ENCODE measurements at regions of chr9 and their contacts with region 1.

Region 1: GRCh38 chr9:80175286-80176150 is 603.8 kb downstream of the TLE4 start:
- DNase-seq: peak; percentile 64
- ATAC-seq: peak; percentile 66
- H3K4me3 ChIP-seq: no peak overlapping the region
- H3K27ac ChIP-seq: no peak overlapping the region
- H3K4me1 ChIP-seq: no peaks in the 10 kb centered on the region
- H3K27me3 ChIP-seq: no peaks in the 10 kb centered on the region
- CTCF ChIP-seq: peak; percentile 75
- POLR2A ChIP-seq: no peak
- RAD21 ChIP-seq: peak; percentile 78

Region 2: GRCh38 chr9:80134487-80134886 is 41.0 kb before region 1 on chr9:
- CTCF ChIA-PET with region 1: no interaction called
- POLR2A ChIA-PET with region 1: no interaction called
- dilution Hi-C with region 1: no loop called
- in situ Hi-C with region 1: no loop called
- intact Hi-C with region 1: no loop called
- DNase-seq: no peak
- ATAC-seq: no peak
- H3K4me3 ChIP-seq: no peak overlapping the region
- H3K27ac ChIP-seq: no peak overlapping the region
- H3K4me1 ChIP-seq: no peaks in the 10 kb centered on the region
- H3K27me3 ChIP-seq: peaks cover 4% of the 10 kb centered on the region; the same call in 1 of the 2 replicates
- CTCF ChIP-seq: no peak
- POLR2A ChIP-seq: no peak
- RAD21 ChIP-seq: no peak

Region 3: GRCh38 chr9:80503671-80504281 is 328.3 kb after region 1 on chr9:
- CTCF ChIA-PET with region 1: no interaction called
- POLR2A ChIA-PET with region 1: no interaction called
- dilution Hi-C with region 1: no loop called
- in situ Hi-C with region 1: no loop called
- intact Hi-C with region 1: loop called (anchors 10 kb)
- DNase-seq: peak; percentile 6
- ATAC-seq: no peak
- H3K4me3 ChIP-seq: no peak overlapping the region
- H3K27ac ChIP-seq: no peak overlapping the region
- H3K4me1 ChIP-seq: 0 out of 2 replicates have a peak, but pooled peaks cover 3% of the 10 kb centered on the region
- H3K27me3 ChIP-seq: no peaks in the 10 kb centered on the region
- CTCF ChIP-seq: no peak
- POLR2A ChIP-seq: no peak
- RAD21 ChIP-seq: no peak

Measured in IMR-90 (cell line).